Activated CD4-positive, alpha-beta memory T cell treated with anti-CD3 and anti-CD28 coated beads, Interleukin-2, amount 10 ng/mL, durations not matched to agents 7 days and 5 days (primary cell): ENCODE measurements at regions of chr12 and their contacts with region 1.

Region 1: DNA sequence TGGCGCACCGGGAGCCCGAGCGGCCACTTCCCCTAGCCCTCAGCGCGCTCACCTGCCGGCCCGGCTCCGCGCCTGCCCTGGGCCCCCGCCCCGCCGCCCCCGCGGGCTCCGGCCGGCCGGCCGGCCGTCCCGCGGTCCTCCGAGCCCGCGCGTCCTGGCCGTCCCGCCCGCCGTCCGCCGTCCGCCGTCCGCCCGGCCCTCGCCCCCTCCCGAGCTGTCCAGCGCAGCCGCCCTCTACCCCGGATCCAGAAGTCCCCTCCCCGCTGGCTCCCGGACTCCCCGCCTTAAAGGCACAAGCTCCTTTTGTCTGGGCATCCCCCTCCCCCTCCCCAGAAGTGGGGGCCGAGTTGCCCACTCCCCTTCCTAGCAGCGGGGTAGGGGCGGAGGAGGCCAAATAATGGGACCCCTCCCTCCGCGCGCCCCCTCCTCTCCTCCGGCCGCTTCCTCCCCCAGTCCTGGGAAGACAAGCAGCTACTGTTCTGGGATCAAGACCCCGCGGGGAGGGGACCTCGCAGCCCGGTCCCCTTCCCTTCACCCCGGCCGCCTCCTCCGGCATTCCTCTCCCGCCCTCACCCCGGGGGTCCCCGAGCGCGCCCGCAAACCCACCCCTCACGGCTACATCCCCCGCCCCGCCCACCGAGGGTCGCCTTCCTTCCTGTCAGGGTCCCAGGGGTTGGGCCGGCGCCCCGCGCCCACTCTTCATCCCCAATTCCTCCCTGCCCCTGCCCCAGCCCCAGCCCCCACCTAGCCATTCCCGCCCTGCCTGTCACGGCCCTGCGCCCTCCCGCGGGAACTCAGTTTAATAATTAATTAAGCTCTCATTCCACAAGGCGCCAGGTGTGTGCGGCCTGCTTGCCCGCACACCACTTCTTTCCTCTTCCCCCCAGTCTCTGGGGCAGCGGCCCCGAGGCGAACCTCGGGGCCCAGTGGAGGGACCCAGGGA is at the start of gene ADCY6:
- DNase-seq: no peak
- H3K4me3 Mint-ChIP-seq: no peak within 1 kb of the TSS
- H3K27ac Mint-ChIP-seq: no peak within 1 kb of the TSS
- H3K4me1 Mint-ChIP-seq: peaks cover 3% of the 10 kb centered on the region
- H3K27me3 Mint-ChIP-seq: peaks cover 46% of the 10 kb centered on the region
- total RNA-seq, gene ADCY6: 0.05 TPM in 1 of 2 experiments, not detected in the other

Region 2: DNA sequence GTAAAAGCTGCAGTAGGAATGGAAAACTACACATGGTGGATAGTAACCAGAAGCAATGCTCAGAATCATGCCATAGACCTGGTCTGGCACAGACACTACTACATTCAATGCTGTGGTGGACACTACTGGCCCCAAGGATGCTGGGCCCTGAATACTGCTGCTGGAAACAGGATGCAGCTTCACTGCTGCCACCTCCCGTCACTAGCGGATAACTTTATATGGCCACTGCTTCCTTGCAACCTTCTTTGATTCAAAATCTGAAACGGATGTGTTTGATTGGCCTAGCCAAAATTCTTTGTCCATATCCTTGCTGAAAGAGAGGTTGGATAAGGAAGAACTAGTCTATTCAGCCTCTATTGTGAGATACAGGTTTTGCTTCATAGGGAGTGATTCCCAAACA is 30.9 kb before region 1 on chr12:
- CTCF ChIA-PET with region 1: interaction called, 171 read pairs
- POLR2A ChIA-PET with region 1: interaction called, 9 read pairs
- DNase-seq: no peak
- H3K4me3 Mint-ChIP-seq: no peak overlapping the region
- H3K27ac Mint-ChIP-seq: no peak overlapping the region
- H3K4me1 Mint-ChIP-seq: no peaks in the 10 kb centered on the region
- H3K27me3 Mint-ChIP-seq: no peaks in the 10 kb centered on the region